Activated naive CD4-positive, alpha-beta T cell treated with anti-CD3 and anti-CD28 coated beads for 36 hours (primary cell): ENCODE measurements at regions of chr5 and their contacts with region 1.

Region 1: GRCh38 chr5:35832762-35833161 is 23.9 kb upstream of the IL7R start:
- DNase-seq: no peak
- H3K4me3 Mint-ChIP-seq: no peak overlapping the region
- H3K27ac Mint-ChIP-seq: peak overlapping the region; percentile 95
- H3K4me1 Mint-ChIP-seq: peaks cover 94% of the 10 kb centered on the region
- H3K27me3 Mint-ChIP-seq: no peaks in the 10 kb centered on the region

Region 2: DNA sequence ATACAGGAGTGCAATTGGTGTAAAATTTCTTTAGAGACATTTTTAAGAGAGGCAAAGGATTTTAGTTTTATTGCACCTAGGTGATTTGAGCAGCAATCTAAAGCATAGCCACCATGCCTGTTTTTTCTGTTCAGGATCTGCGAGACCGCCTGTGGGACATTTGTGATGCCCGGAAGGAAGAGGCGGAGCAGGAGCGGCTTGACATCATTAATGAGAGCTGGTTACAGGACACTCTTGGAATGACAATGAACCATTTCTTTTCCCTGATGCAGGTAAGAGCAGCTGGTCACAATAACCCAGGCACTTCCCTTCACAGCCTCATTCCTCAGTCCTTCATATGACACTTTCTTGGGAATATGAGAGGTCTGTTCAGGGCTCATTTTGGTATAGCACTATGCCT is 79.3 kb before region 1 on chr5:
- CTCF ChIA-PET with region 1: no interaction called
- intact Hi-C with region 1: no loop called
- DNase-seq: no peak
- H3K4me3 Mint-ChIP-seq: no peak overlapping the region
- H3K27ac Mint-ChIP-seq: no peak overlapping the region
- H3K4me1 Mint-ChIP-seq: peaks cover 17% of the 10 kb centered on the region
- H3K27me3 Mint-ChIP-seq: no peaks in the 10 kb centered on the region

Region 3: GRCh38 chr5:35771309-35771708 is 61.5 kb before region 1 on chr5:
- CTCF ChIA-PET with region 1: no interaction called
- intact Hi-C with region 1: no loop called
- DNase-seq: no peak
- H3K4me3 Mint-ChIP-seq: no peak overlapping the region
- H3K27ac Mint-ChIP-seq: no peak overlapping the region
- H3K4me1 Mint-ChIP-seq: peaks cover 34% of the 10 kb centered on the region
- H3K27me3 Mint-ChIP-seq: no peaks in the 10 kb centered on the region

Region 4: DNA sequence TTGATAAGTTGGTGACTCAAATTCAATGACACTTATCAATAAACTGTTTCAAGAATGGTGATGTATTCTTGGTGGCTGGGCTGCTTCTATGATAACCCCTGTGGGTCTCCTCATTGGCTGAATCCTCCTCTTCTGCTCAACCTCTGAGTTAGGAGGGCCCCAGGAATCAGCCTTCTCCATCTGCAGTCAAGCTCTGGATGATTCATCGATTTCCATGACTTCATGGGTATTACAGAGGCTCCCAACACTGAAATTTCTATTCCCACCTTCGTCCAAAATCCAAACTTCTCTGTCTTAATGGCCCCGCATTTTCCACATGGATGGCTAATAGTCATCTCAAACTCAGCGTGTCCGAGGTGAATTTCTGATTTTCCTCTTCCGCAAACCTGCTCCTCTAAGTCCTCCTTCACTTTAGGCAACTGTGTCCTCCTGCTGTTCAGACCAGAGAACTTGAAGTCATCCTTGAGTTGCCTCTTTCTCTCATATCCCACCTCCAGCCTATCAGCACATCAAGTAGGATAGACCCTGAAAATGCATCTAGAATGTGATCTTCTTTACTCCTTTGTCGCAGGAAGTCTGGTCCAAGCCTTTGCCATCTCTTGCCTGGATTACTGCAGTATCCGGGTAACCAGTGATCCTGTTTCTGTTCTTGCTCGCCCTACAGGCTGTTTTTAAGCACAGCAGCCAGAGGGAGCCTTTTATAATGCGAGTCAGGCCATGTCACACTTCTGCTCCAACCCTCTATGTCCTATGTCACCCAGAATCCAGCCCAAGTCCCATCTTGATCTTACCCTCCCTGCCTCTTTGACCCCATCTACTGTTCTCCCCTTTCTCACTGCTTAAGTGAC is 17.4 kb before region 1 on chr5:
- CTCF ChIA-PET with region 1: interaction called, 10 read pairs
- intact Hi-C with region 1: loop called (anchors 1 kb)
- DNase-seq: peak; percentile 76
- H3K4me3 Mint-ChIP-seq: no peak overlapping the region
- H3K27ac Mint-ChIP-seq: no peak overlapping the region
- H3K4me1 Mint-ChIP-seq: peaks cover 45% of the 10 kb centered on the region
- H3K27me3 Mint-ChIP-seq: no peaks in the 10 kb centered on the region

Region 5: DNA sequence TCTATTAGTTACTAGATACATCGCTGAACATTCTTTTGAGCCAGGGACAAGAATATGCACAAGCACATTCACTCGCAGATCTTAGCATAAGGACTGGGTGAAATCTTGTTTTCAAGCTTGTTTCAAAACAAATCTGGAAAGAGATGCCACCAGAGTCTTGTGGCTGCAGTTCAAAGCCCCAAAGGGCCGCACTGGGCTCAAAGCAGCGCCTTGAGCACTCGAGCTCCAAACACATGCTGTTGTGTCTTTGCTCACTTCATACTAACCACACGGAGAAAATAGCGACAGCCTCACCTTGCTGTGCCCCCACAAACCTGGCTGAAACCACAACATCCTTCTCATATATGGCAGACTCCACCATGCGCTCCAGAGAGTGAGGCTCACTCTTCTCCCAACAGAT is 10.3 kb before region 1 on chr5:
- CTCF ChIA-PET with region 1: interaction called, 10 read pairs
- intact Hi-C with region 1: loop called (anchors 1 kb)
- DNase-seq: peak; percentile 56
- H3K4me3 Mint-ChIP-seq: peak overlapping the region; percentile 30
- H3K27ac Mint-ChIP-seq: peak overlapping the region; percentile 95
- H3K4me1 Mint-ChIP-seq: peaks cover 87% of the 10 kb centered on the region
- H3K27me3 Mint-ChIP-seq: no peaks in the 10 kb centered on the region